Activated naive CD4-positive, alpha-beta T cell treated with anti-CD3 and anti-CD28 coated beads for 36 hours (primary cell): ENCODE measurements at regions of chr14 and their contacts with region 1.

Region 1: DNA sequence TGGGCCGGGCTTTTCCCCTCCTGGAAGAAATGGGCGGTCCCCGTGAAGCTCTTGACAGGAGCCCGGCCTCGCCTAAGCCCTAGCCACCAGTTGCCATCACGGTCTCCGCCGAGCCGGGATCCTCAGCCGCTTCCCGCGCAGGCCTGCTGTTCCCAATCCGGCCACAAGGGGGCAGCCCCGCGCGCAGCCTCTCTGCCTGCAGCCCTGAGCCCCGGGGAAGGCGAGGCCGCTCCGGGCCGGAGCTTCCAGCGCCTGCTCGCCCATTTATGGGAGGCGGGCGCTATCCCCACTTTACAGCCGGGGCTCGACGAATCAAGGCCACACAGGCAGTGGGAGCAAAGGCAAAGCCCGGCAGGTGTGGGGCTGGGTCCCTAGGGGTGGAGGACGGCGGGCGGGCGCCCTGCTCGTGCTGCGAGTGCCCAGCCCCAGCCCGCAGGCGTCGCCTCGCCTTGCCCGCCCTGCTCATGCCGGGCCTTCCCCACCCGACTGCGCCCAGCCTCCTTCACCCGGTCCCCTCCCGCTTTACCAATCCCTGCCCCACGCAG is 61.5 kb downstream of the LGMN start:
- DNase-seq: peak; percentile 53
- H3K4me3 Mint-ChIP-seq: no peak overlapping the region
- H3K27ac Mint-ChIP-seq: no peak overlapping the region
- H3K4me1 Mint-ChIP-seq: no peaks in the 10 kb centered on the region
- H3K27me3 Mint-ChIP-seq: no peaks in the 10 kb centered on the region

Region 2: DNA sequence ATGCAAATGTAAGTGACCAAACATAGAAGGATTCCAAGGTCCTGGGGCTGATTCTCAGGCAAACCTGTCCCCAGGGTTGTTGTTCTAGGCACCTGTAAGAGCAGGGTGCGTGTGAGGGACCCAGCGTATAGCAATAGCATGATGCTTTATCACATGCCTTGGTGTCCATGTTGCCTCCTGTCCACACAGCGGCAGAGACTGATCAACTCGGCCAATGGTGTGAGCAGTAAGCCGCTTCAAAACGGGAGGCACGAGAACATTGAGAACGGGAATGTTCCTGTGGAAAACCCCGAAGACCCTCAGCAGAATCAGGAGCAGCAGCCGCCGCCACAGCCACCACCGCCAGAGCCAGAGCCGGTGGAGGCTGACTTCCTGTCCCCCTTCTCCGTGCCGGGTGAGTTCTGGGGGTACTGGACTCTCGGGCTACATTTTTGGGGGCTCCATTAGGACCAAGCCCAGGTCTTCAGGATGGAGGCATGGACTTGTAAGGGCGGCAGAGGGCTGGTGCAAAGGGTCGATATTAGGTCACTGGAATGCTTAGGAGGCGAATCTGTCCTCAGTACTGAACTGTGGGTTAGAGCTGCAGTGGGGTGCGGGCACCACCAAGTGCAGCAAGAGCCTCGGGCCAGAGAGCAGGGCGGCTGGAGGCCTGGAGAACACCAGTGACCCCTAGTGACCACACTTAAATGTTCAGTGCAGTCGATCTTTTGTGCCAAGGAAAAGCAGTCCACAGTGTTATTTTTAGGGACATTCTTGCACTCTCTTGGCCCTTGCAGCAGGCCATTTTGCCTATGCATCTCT is 230.6 kb before region 1 on chr14:
- CTCF ChIA-PET with region 1: interaction called, 3 read pairs
- intact Hi-C with region 1: loop called (anchors 10 kb)
- DNase-seq: peak; percentile 20
- H3K4me3 Mint-ChIP-seq: no peak overlapping the region
- H3K27ac Mint-ChIP-seq: no peak overlapping the region
- H3K4me1 Mint-ChIP-seq: peaks cover 8% of the 10 kb centered on the region
- H3K27me3 Mint-ChIP-seq: no peaks in the 10 kb centered on the region

Region 3: GRCh38 chr14:92612988-92613658 is 73.8 kb before region 1 on chr14:
- CTCF ChIA-PET with region 1: interaction called, 35 read pairs
- intact Hi-C with region 1: no loop called
- DNase-seq: peak; percentile 87
- H3K4me3 Mint-ChIP-seq: no peak overlapping the region
- H3K27ac Mint-ChIP-seq: no peak overlapping the region
- H3K4me1 Mint-ChIP-seq: peaks cover 52% of the 10 kb centered on the region
- H3K27me3 Mint-ChIP-seq: no peaks in the 10 kb centered on the region

Region 4: GRCh38 chr14:92783816-92784431 is 97.0 kb after region 1 on chr14:
- CTCF ChIA-PET with region 1: interaction called, 13 read pairs
- intact Hi-C with region 1: no loop called
- DNase-seq: peak; percentile 51
- H3K4me3 Mint-ChIP-seq: no peak overlapping the region
- H3K27ac Mint-ChIP-seq: no peak overlapping the region
- H3K4me1 Mint-ChIP-seq: peaks cover 7% of the 10 kb centered on the region
- H3K27me3 Mint-ChIP-seq: no peaks in the 10 kb centered on the region

Region 5: DNA sequence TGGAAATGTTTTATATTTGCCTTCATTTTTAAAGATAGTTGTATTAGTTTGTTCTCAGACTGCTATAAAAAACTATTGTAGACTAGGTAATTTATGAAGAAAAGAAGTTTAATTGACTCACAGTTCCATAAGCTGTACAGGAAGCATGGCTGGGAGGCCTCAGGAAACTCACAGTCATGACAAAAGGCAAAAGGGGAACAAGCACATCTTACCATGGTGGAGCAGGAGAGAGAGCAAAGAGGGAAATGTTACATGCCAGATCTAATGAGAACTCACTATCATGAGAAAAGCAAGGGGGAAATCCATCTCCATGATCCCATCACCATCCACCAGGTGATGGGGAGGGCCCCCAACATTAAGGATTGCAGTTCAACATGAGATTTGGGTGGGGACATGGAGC is 708.3 kb after region 1 on chr14:
- CTCF ChIA-PET with region 1: no interaction called
- intact Hi-C with region 1: no loop called
- DNase-seq: no peak
- H3K4me3 Mint-ChIP-seq: no peak overlapping the region
- H3K27ac Mint-ChIP-seq: no peak overlapping the region
- H3K4me1 Mint-ChIP-seq: no peaks in the 10 kb centered on the region
- H3K27me3 Mint-ChIP-seq: peaks cover 31% of the 10 kb centered on the region